ENCODE measurements at regions of chr14 and their contacts with region 1.

Region 1: GRCh38 chr14:24299255-24300195 is at the starts of genes DHRS1 and NOP9:
- DNase-seq: peak; percentile 89 to 92 (median 91)
- H3K4me3 ChIP-seq: peak within 1 kb of the TSS; percentile 85 to 98 (median 92)
- H3K27ac ChIP-seq: peak within 1 kb of the TSS; percentile 75 to 83
- H3K4me1 ChIP-seq: peaks cover 7 to 36% (median 28%) of the 10 kb centered on the region in 4 experiments
- H3K27me3 ChIP-seq: no peaks in the 10 kb centered on the region

Region 2: GRCh38 chr14:24232121-24232644 is 67.3 kb before region 1 on chr14 and contains the start of gene NEDD8:
- CTCF ChIA-PET with region 1: interaction called, 207 read pairs
- POLR2A ChIA-PET with region 1: no interaction called
- DNase-seq: peak; percentile 90 to 96 (median 95)
- H3K4me3 ChIP-seq: peak within 1 kb of the TSS; percentile 55 to 96 (median 90)
- H3K27ac ChIP-seq: peak within 1 kb of the TSS; percentile 61 to 87
- H3K4me1 ChIP-seq: peaks cover 11 to 37% (median 29%) of the 10 kb centered on the region in 4 experiments
- H3K27me3 ChIP-seq: no peaks in the 10 kb centered on the region

Region 3: DNA sequence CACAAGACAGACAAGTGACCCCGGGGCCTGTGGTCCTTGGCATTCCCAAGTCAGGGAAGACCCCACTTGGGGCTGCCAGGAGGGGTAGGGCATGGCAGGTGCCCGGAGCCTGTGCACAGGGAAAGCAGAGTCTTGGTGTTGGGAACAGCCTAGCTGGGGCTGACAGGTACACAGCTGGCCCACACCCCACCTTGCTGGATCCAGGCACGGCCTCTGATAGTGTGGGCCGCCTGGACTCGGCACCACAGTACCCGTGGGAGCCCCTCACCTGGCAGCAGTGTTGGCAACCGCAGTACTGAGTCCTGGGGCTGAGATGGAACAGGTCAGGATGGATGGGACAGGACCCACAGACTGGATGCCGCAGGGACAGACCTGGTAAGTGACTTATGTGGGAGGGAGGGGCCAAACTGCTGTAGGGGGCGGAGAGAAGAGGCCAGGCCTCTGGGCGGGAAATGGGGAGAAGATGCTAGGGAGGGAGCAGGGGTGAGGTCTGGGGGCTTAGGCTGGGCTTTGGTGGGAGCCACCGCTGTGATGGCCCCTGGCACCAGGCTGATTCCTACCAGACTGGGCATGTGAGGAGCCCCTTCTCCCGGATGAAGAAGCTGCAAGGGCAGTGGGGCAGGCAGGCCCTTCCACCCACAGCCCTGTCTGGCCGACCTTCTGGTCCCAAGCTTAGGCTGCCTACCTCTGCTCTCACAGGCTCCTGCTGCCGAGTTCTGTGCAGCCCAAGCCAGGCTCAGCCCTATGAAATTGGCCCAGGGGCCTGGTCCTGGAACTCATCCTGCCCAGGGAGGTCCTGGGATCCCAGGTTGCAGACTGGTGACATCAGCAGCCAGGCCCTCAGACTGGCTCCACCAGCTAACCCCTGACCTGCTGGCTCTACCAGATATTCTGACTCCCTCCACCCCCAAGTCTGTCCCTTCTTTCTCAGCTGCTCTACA is 36.4 kb before region 1 on chr14 and contains the start of gene TGM1:
- CTCF ChIA-PET with region 1: interaction called, 57 read pairs
- POLR2A ChIA-PET with region 1: no interaction called
- DNase-seq: no peak
- H3K4me3 ChIP-seq: no peak within 1 kb of the TSS
- H3K27ac ChIP-seq: no peak within 1 kb of the TSS
- H3K4me1 ChIP-seq: no peaks in the 10 kb centered on the region
- H3K27me3 ChIP-seq: no peaks in the 10 kb centered on the region

Region 4: GRCh38 chr14:24279301-24280186 is 20.0 kb before region 1 on chr14:
- CTCF ChIA-PET with region 1: interaction called, 153 read pairs
- POLR2A ChIA-PET with region 1: no interaction called
- DNase-seq: peak; percentile 79 to 89 (median 88)
- H3K4me3 ChIP-seq: peak overlapping the region in 1 of 7 experiments; percentile 1
- H3K27ac ChIP-seq: no peak overlapping the region
- H3K4me1 ChIP-seq: peaks cover 19 to 62% (median 38%) of the 10 kb centered on the region in 4 experiments
- H3K27me3 ChIP-seq: no peaks in the 10 kb centered on the region

Region 5: GRCh38 chr14:24431569-24432258 is 132.2 kb after region 1 on chr14:
- CTCF ChIA-PET with region 1: interaction called, 17 read pairs
- POLR2A ChIA-PET with region 1: interaction called, 3 read pairs
- DNase-seq: peak; percentile 94 to 96 (median 95)
- H3K4me3 ChIP-seq: peak overlapping the region in 3 of 7 experiments; percentile 81 to 93 (median 89)
- H3K27ac ChIP-seq: no peak overlapping the region
- H3K4me1 ChIP-seq: peaks cover 12 to 68% (median 66%) of the 10 kb centered on the region in 4 experiments
- H3K27me3 ChIP-seq: no peaks in the 10 kb centered on the region